Activated CD4-positive, alpha-beta T cell treated with anti-CD3 and anti-CD28 coated beads, Interleukin-2, amount 10 ng/mL, durations not matched to agents 7 days and 5 days (primary cell): ENCODE measurements at regions of chrX and their contacts with region 1.

Region 1: DNA sequence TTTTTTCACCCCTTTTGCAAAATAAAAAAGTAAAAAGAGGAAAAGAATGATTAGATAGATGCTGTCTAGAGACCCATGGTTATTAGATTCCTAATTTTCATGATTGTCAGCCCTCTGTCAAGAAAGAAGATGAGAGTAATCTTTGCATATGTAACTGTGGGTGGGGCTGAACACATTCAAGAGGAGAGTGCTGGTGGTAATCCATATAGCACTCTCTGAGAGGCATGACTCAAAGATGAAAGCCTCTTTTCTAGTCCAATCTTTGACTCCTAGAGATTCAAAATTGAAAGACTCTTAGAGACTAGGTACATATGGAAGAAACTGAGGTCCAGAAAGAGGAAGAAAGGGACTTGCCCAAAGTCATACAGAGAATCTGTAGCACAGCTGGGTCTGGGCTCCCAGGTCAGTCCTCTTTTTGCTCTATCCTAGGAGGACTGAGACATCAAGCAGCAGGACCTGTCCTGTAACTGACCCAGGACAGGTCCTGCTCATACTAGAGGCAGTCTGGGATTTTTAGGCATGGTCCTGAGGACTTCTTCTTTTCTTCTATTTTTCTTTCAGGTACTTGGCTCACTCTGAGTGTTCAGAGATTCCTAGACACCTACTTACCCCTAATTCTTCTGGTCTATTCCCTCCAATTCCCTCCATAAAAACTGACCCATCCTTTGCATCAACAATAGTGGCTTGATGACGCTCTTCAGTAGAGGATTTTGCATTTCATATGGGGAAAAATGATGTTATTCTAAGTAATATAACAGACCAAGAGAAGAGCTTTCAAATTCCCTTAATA is 23.8 kb downstream of the VSIG4 start:
- DNase-seq: no peak
- H3K4me3 Mint-ChIP-seq: peak overlapping the region; percentile 66
- H3K27ac Mint-ChIP-seq: peak overlapping the region; percentile 93
- H3K4me1 Mint-ChIP-seq: peaks cover 93% of the 10 kb centered on the region
- H3K27me3 Mint-ChIP-seq: no peaks in the 10 kb centered on the region

Region 2: DNA sequence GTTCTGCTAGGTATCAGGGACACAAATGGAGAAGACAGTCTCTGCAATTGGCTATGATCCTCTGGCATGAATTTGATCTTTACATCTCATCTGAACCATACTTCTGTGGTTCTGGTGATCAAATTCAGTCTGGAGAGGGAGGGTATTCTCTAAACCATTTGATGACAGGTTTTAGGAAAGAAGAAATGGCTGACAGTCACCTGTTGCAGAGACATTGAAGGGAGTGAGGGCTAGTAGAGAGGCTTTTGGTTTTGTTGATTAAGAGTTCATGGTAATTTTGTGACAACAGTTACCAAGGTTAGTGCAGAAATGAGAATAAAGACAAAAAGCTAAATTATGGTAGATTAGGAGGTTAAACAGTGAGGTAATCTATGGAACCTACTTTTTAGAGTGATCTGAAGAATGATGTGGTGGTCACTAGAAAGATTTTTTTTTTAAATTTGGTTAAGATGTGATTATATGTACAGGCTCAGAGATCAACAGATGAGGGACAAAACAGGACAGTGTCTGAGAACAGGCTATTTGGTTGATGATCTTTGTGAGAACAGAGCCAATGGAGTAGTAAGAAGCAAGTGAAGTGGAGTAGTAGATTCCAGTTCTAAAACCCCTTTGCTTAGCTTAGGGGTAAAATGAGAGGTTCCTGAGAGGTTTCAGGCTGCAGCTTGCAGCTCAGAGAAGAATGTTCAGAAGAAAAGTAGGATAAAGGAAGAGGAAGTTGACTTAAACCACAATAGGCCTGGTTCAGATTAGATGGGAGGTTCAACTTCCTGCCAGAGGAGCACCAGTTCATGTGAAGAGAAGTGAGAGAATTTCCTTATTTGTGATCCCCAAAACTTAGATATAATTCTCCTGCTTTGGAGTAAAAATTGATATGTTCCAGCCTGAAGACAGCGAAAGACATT is 10.9 kb before region 1 on chrX:
- CTCF ChIA-PET with region 1: interaction called, 11 read pairs
- POLR2A ChIA-PET with region 1: no interaction called
- DNase-seq: no peak
- H3K4me3 Mint-ChIP-seq: peak overlapping the region; percentile 43
- H3K27ac Mint-ChIP-seq: peak overlapping the region; percentile 85
- H3K4me1 Mint-ChIP-seq: peaks cover 55% of the 10 kb centered on the region
- H3K27me3 Mint-ChIP-seq: no peaks in the 10 kb centered on the region

Region 3: DNA sequence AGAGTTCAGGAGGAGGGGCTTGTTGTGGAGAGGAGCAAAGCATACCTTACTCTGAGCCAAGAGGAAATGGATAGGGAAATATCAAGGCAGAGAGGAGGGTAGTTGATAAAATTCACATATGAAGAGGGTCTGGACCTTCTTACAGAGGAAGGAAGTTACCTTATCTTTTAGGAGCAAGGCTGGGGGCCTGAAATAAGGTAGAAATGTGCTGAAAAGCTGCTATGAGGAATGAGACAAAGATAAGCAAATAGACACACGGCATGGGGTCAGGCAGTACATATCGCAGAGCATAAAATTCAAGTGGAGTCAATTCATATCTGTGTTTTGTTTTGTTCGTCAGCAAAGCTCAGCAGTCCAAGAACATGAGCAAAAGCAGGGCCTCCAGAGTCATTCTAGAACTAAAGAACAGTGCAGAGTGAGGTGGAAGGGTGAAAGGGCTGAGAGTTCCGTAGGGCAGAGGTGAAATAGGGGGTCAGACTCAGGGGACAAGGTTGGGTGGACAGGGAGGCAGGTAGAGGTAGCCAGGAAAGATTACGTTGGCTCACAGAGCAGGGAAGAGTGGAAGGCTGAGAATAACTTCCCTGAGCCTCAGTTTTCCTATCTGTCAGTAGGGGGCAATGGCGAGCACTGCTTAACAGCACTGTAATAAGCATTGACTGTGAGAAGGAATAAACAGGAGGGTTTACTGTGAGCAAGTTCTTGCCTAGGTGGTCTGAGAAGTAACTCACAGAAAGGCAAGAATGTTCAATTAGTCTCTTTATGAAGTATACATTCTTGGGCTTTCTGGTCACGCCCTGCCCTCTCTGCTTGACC is 14.6 kb after region 1 on chrX:
- CTCF ChIA-PET with region 1: interaction called, 18 read pairs
- POLR2A ChIA-PET with region 1: no interaction called
- DNase-seq: peak; percentile 22
- H3K4me3 Mint-ChIP-seq: no peak overlapping the region
- H3K27ac Mint-ChIP-seq: no peak overlapping the region
- H3K4me1 Mint-ChIP-seq: peaks cover 4% of the 10 kb centered on the region
- H3K27me3 Mint-ChIP-seq: no peaks in the 10 kb centered on the region